ENCODE measurements at regions of chr7 and their contacts with region 1.

Region 1: GRCh38 chr7:87797798-87798403 is 78.3 kb downstream of the SLC25A40 start:
- DNase-seq: peak in 3 of 14 experiments; percentile 60 to 69 (median 65)
- ATAC-seq: peak; percentile 74
- H3K4me3 ChIP-seq: no peak overlapping the region
- H3K4me3 Mint-ChIP-seq: no peak overlapping the region
- H3K27ac ChIP-seq: no peak overlapping the region
- H3K27ac Mint-ChIP-seq: no peak overlapping the region
- H3K4me1 ChIP-seq: no peaks in the 10 kb centered on the region
- H3K4me1 Mint-ChIP-seq: no peaks in the 10 kb centered on the region
- H3K27me3 ChIP-seq: no peaks in the 10 kb centered on the region
- H3K27me3 Mint-ChIP-seq: peaks cover 13% of the 10 kb centered on the region
- CTCF ChIP-seq: peak; percentile 70

Region 2: GRCh38 chr7:88169717-88170320 is 371.9 kb after region 1 on chr7:
- CTCF ChIA-PET with region 1: no interaction called
- POLR2A ChIA-PET with region 1: no interaction called
- intact Hi-C with region 1: loop called in 1 of 2 experiments (anchors 5 kb)
- DNase-seq: peak in 3 of 14 experiments; percentile 2 to 7 (median 2)
- ATAC-seq: no peak
- H3K4me3 ChIP-seq: no peak overlapping the region
- H3K4me3 Mint-ChIP-seq: no peak overlapping the region
- H3K27ac ChIP-seq: no peak overlapping the region
- H3K27ac Mint-ChIP-seq: no peak overlapping the region
- H3K4me1 ChIP-seq: no peaks in the 10 kb centered on the region
- H3K4me1 Mint-ChIP-seq: no peaks in the 10 kb centered on the region
- H3K27me3 ChIP-seq: no peaks in the 10 kb centered on the region
- H3K27me3 Mint-ChIP-seq: no peaks in the 10 kb centered on the region
- CTCF ChIP-seq: peak; percentile 66